K562 (cell line): ENCODE measurements at regions of chr2 and their contacts with region 1.

Region 1: DNA sequence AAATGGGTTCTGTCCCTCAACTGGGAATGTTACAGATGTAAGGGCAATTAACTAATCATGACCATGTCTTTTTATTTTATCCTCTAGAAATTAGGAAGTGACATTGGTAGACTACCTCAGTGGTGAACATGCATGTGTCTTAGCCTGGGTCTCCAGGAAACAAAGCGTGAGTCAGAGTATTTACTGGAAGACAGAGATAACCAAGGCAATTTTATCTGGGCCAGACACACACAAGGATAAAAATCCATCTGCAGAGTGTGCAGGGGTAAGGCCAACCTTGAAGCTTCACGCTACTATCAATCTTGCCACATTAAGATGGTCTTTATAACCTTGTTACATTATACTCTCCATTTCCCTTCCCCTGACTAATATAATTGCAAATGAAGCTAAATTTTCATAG is 487.5 kb downstream of the SUCLG1 start:
- DNase-seq: peak; percentile 73 to 89 (median 82)
- ATAC-seq: peak; percentile 92
- H3K4me3 ChIP-seq: no peak overlapping the region
- H3K27ac ChIP-seq: peak overlapping the region; percentile 83
- H3K4me1 ChIP-seq: peaks cover 3 to 45% of the 10 kb centered on the region in 2 experiments; a peak in 4 of 5 replicates
- H3K27me3 ChIP-seq: no peaks in the 10 kb centered on the region
- CTCF ChIP-seq: no peak
- EP300 ChIP-seq: peak; percentile 99
- POLR2A ChIP-seq: no peak
- RAD21 ChIP-seq: no peak

Region 2: DNA sequence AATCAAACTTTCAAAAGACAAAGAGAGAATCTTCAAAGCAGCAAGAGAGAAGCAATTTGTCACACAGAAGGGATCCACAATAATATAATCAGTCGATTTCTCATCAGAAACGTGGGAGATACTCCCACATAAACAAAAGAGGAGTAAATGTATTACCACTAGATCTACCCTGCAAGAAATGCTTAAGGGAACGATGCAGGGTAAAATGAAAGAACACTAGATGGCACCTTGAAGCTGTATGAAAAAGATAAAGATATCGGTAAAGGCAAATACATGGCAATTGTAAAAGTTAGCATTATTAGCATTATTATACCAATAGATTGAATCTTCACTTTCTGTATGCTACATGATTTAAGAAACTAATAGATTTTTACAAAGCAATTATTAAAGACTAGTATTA is 189.4 kb before region 1 on chr2:
- CTCF ChIA-PET with region 1: no interaction called
- POLR2A ChIA-PET with region 1: no interaction called
- in situ Hi-C with region 1: no loop called
- intact Hi-C with region 1: loop called (anchors 10 kb)
- DNase-seq: no peak
- ATAC-seq: no peak
- H3K4me3 ChIP-seq: no peak overlapping the region
- H3K27ac ChIP-seq: no peak overlapping the region
- H3K4me1 ChIP-seq: peaks cover 5 to 9% of the 10 kb centered on the region in 2 experiments; a peak in 3 of 5 replicates
- H3K27me3 ChIP-seq: no peaks in the 10 kb centered on the region
- CTCF ChIP-seq: peak in 2 of 3 experiments; percentile 32 to 38; a peak in 3 of 6 replicates
- EP300 ChIP-seq: no peak
- POLR2A ChIP-seq: no peak
- RAD21 ChIP-seq: peak in 1 of 2 experiments; percentile 39; a peak in 2 of 4 replicates

Region 3: DNA sequence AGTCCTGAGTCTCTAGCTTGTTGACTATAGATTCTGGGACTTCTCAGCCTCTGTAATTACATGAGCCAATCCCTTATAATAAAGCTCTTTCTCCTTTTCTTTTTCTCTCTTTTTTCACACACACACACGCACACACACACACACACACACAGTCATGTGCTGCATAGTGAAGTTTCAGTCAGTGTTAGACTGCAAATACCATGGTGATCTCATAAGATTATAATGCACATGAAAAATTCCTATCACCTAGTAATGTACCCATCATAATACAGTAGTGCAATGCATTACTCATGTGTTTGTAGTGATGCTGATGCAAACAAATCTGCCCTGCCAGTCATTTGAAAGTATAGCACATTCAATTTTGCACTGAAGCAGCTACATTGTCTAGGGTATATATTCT is 70.7 kb before region 1 on chr2:
- CTCF ChIA-PET with region 1: no interaction called
- POLR2A ChIA-PET with region 1: no interaction called
- in situ Hi-C with region 1: no loop called
- intact Hi-C with region 1: no loop called
- DNase-seq: no peak
- ATAC-seq: no peak
- H3K4me3 ChIP-seq: no peak overlapping the region
- H3K27ac ChIP-seq: no peak overlapping the region
- H3K4me1 ChIP-seq: no peaks in the 10 kb centered on the region
- H3K27me3 ChIP-seq: no peaks in the 10 kb centered on the region
- CTCF ChIP-seq: no peak
- EP300 ChIP-seq: no peak
- POLR2A ChIP-seq: no peak
- RAD21 ChIP-seq: no peak

Region 4: GRCh38 chr2:83951378-83951947 is 20.1 kb before region 1 on chr2:
- CTCF ChIA-PET with region 1: no interaction called
- POLR2A ChIA-PET with region 1: interaction called, 3 read pairs
- in situ Hi-C with region 1: no loop called
- intact Hi-C with region 1: loop called (anchors 2 kb)
- DNase-seq: peak; percentile 64 to 83 (median 72)
- ATAC-seq: peak; percentile 83
- H3K4me3 ChIP-seq: no peak overlapping the region
- H3K27ac ChIP-seq: peak overlapping the region; percentile 56
- H3K4me1 ChIP-seq: peaks cover 10 to 28% of the 10 kb centered on the region in 2 experiments; a peak in 4 of 5 replicates
- H3K27me3 ChIP-seq: no peaks in the 10 kb centered on the region
- CTCF ChIP-seq: no peak
- EP300 ChIP-seq: peak; percentile 95
- POLR2A ChIP-seq: no peak
- RAD21 ChIP-seq: no peak